IMR-90 (cell line): ENCODE measurements at regions of chr10 and their contacts with region 1.

Region 1: GRCh38 chr10:71314028-71314693 is 4.9 kb upstream of the SLC29A3 start:
- DNase-seq: peak; percentile 24
- ATAC-seq: peak; percentile 66
- H3K4me3 ChIP-seq: no peak overlapping the region
- H3K27ac ChIP-seq: no peak overlapping the region
- H3K4me1 ChIP-seq: peaks cover 4% of the 10 kb centered on the region; the same call in 1 of the 2 replicates
- H3K27me3 ChIP-seq: peaks cover 11% of the 10 kb centered on the region
- CTCF ChIP-seq: peak; percentile 75
- POLR2A ChIP-seq: no peak
- RAD21 ChIP-seq: peak; percentile 82

Region 2: DNA sequence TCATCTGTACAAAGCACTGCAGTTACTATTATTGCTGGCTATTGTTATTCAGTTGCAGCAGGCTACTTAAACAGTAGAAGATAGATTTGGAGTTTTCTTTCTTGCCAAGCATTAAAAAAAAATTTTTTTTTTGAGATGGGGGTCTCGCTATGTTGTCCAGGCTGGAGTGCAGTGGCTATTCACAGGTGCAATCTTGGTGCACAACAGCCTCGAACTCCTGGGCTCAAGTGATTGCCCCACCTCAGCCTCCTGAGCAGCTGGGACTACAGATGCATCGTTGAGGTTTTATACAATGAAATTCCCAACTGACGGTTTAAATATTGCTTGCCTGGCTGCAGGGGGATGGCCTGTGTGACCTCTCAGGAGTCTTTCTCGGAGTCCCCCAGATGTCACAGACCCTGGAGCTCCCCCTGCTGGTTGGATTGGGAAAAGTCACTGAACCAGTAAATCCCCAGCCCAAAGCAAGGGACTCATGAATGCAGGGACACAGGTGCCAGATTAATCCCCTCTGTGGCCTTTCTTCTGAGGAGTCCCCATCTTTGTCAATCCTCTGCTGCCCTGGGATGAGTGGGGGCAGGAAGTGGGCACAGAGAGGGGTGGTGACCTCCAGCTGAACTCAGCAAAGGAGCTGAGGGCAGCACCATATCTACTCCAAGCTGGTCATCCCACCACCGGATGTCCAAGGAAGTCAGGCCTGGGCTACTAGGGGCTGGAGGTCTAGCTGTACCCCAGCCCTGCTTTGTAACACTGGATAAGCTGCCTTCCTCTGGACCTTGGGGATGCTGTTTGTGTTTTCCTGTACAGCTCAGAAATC is 255.8 kb after region 1 on chr10:
- CTCF ChIA-PET with region 1: interaction called, 11 read pairs
- POLR2A ChIA-PET with region 1: no interaction called
- dilution Hi-C with region 1: no loop called
- in situ Hi-C with region 1: loop called (anchors 5 kb)
- intact Hi-C with region 1: loop called (anchors 1 kb)
- DNase-seq: peak; percentile 23
- ATAC-seq: peak; percentile 77
- H3K4me3 ChIP-seq: no peak overlapping the region
- H3K27ac ChIP-seq: no peak overlapping the region
- H3K4me1 ChIP-seq: no peaks in the 10 kb centered on the region
- H3K27me3 ChIP-seq: peaks cover 31% of the 10 kb centered on the region
- CTCF ChIP-seq: peak; percentile 68
- POLR2A ChIP-seq: no peak
- RAD21 ChIP-seq: peak; percentile 65

Region 3: DNA sequence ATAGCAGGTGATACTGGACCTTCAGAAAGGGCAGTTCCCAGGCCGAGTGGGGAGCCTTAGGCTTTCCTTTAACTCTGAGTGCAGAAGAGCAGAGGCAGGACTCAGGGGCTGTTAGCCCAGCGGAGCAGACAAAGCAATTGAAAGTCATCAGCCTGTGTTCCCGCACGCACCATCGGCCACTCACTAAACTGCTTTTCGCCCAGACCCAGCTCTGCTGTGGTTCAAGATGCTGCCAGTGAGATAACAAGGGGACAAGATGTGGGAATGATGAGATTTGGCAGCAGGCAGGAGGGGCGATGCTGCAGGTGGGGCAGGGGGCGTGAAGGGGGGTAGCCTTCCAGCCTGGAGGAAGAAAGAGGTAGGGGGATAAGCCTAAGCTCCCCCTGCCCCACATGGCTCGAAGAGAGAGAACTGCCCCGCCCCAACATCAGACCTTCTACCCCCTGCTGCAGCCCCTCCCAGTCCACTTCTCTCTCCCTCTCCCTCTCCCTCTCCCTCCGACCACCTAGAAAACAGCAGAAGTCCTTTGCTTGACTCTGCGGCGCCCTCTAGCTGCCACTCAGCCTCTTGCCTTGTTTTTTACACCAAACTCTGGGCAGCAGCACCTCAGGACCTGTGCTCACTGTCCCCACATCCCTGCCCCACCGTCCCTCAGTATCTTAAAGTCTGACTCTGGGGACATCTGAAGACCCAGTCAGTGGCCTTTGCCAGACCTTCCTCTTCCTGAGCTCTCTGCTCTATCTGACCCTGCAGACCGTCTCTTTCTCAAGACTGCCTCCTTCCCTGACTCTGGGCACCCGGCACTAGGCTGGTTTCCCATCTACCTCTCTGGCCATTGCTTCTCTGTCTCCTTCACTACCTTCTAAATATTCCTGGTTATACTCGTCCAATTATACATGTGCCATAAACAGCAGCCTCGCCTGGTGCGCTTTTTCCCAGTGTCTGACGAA is 294.9 kb after region 1 on chr10:
- CTCF ChIA-PET with region 1: interaction called, 3 read pairs
- POLR2A ChIA-PET with region 1: no interaction called
- dilution Hi-C with region 1: no loop called
- in situ Hi-C with region 1: loop called (anchors 10 kb)
- intact Hi-C with region 1: loop called (anchors 1 kb)
- DNase-seq: peak; percentile 47
- ATAC-seq: peak; percentile 77
- H3K4me3 ChIP-seq: no peak overlapping the region
- H3K27ac ChIP-seq: no peak overlapping the region
- H3K4me1 ChIP-seq: no peaks in the 10 kb centered on the region
- H3K27me3 ChIP-seq: peaks cover 43% of the 10 kb centered on the region
- CTCF ChIP-seq: peak; percentile 75
- POLR2A ChIP-seq: no peak
- RAD21 ChIP-seq: peak; percentile 60

Region 4: DNA sequence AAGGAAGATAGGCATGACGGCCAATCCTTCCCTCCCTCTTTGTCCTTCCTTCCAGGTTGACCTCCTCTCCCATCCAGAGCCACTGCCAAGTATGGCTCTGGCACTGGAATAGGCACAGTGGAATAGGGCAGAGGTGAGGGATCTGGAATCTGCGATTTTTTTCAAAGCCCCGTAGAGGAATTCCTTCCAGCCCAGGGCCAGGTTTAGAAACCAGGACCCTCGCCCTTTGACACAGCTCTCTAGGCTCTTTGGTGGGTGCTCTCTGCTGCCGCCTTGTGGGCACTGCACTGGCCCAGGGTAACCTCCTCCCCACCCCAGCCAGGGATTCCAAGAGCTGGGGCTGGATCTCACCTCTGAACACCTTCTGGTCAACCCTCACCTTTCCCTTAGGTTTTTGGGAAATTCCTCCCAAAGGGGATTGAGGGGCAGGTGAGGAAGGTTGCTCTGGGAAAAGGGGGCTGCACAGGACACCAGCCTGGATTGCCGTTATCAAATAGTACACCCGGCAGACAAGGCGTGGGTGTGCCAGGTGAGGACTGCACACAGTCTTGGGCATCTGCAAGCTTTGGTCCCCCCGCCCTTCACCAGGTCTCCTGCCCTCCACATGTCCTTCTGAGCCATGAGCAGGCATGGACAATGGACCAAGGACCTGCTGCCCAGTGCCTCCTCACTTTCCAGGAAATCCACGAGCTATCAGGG is 382.6 kb after region 1 on chr10:
- CTCF ChIA-PET with region 1: interaction called, 3 read pairs
- POLR2A ChIA-PET with region 1: no interaction called
- dilution Hi-C with region 1: no loop called
- in situ Hi-C with region 1: no loop called
- intact Hi-C with region 1: loop called (anchors 2 kb)
- DNase-seq: no peak
- ATAC-seq: peak; percentile 89
- H3K4me3 ChIP-seq: no peak overlapping the region
- H3K27ac ChIP-seq: no peak overlapping the region
- H3K4me1 ChIP-seq: no peaks in the 10 kb centered on the region
- H3K27me3 ChIP-seq: peaks cover 37% of the 10 kb centered on the region
- CTCF ChIP-seq: peak; percentile 63
- POLR2A ChIP-seq: no peak
- RAD21 ChIP-seq: peak; percentile 50

Region 5: DNA sequence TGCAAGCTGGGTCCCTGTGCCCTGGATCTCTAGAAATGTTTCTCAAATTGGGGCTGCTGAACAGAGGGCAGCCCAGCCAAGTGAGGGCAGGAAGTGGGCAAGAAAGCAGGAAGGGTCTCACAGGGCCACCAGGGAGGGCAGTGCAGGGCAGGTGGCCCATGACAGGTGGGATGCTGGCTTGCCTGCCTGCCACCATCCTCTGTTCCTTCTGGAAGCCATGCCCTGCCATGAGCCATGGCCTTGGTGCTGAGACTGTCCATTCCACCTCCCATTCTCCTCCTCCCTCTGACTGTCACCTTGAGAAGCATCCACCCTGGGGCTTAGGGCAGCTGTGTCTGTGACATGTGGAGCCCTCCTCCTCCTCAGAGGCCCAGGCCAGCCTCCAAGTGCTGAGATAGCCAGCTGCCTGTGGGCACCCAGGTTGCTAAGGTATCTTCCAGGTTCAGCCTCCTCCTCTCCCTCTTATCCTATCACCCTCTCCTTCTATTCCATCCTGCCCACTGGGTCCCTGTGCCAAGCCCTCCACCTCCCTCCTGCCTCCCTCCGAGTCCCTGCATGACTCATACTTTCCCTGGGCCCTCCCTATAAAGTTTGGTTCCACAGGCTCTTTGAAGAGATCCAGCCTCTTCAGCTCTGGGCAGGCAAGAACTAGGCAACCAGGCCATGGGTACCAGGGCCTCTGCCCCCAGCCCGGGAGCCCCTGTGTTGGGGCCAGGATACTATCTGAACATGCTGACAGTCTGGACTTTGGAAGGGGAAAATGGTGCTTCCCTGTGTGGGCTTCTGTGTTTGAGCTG is 457.9 kb after region 1 on chr10:
- CTCF ChIA-PET with region 1: no interaction called
- POLR2A ChIA-PET with region 1: no interaction called
- dilution Hi-C with region 1: no loop called
- in situ Hi-C with region 1: no loop called
- intact Hi-C with region 1: loop called (anchors 1 kb)
- DNase-seq: peak; percentile 66
- ATAC-seq: peak; percentile 32
- H3K4me3 ChIP-seq: no peak overlapping the region
- H3K27ac ChIP-seq: peak overlapping the region; percentile 7
- H3K4me1 ChIP-seq: peaks cover 44% of the 10 kb centered on the region
- H3K27me3 ChIP-seq: 0 out of 2 replicates have a peak, but pooled peaks cover 2% of the 10 kb centered on the region
- CTCF ChIP-seq: no peak
- POLR2A ChIP-seq: no peak
- RAD21 ChIP-seq: no peak

Region 6: DNA sequence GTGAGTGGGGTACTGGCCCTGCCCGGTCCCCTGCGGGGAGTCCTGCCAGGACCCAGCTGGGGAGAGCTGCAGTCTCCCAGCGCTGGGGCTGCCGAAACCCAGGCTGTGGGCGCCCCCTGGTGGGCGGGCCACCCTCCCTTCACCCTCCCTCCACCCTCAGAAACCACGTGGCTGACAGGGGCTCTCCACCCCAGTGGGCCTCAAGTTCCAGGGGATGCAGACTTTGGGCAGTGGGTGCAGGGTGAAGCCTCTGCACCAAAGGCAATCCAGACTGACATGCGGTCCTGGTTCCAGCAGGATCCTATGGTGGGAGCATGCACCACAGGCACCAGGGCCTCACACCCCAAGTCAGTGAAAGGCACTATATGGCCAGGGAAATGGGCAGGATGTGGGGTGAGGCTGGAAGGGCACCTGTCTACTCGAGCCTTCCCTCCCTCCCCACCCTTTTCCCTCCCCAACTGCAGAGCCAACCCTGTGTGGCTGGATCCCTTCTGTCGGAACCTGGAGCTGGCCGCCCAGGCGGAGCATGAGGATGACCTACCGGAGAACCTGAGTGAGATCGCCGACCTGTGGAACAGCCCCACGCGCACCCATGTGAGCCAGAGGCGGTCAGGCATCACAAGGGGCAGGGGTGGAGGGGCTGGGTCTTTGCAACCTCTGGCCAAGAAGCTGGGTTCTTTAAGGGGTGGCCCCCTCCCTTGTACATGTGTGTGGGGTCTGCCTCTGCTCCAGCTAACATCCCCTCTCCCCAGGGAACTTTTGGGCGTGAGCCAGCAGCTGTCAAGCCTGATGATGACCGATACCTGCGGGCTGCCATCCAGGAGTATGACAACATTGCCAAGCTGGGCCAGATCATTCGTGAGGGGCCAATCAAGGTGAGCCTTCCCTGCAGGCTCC is 498.1 kb after region 1 on chr10:
- CTCF ChIA-PET with region 1: no interaction called
- POLR2A ChIA-PET with region 1: no interaction called
- dilution Hi-C with region 1: no loop called
- in situ Hi-C with region 1: loop called (anchors 10 kb)
- intact Hi-C with region 1: loop called (anchors 1 kb)
- DNase-seq: peak; percentile 34
- ATAC-seq: peak; percentile 91
- H3K4me3 ChIP-seq: no peak overlapping the region
- H3K27ac ChIP-seq: no peak overlapping the region
- H3K4me1 ChIP-seq: no peaks in the 10 kb centered on the region
- H3K27me3 ChIP-seq: peaks cover 4% of the 10 kb centered on the region; the same call in 1 of the 2 replicates
- CTCF ChIP-seq: peak; percentile 87
- POLR2A ChIP-seq: no peak
- RAD21 ChIP-seq: peak; percentile 91